Activated naive CD4-positive, alpha-beta T cell treated with anti-CD3 and anti-CD28 coated beads for 36 hours (primary cell): ENCODE measurements at regions of chr1 and their contacts with region 1.

Region 1: DNA sequence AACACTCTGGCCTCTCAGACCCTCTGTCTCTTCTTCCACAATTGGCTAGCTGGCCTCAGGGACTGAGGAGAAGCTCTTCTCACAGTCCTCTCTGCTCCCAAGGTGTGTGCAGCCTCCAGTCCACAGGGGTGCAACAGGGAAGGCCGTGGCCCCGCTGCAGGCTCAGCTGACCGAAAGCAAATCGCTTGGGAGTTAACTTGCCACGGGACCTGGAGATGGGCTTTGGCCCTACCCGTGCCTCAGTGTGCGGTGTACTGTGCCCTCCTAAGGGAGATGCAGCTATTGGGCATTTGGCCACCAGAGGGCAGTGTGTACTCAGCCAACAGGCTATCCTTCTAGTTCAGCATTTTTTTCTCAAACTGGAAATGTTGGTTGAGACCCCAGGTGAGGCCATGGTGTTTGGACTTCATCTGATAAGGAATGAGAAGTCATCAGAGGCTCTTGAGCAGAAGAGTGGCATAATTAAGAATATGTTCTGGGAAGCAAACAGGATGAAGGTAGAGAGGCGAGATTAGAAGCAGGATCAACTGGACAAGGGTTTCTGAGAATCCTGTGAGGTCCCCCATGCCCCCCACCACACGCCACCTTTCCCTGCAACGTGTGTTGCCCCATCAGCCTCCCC is 42.5 kb upstream of the TMEM125 start:
- DNase-seq: peak; percentile 93
- H3K4me3 Mint-ChIP-seq: no peak overlapping the region
- H3K27ac Mint-ChIP-seq: no peak overlapping the region
- H3K4me1 Mint-ChIP-seq: no peaks in the 10 kb centered on the region
- H3K27me3 Mint-ChIP-seq: peaks cover 2% of the 10 kb centered on the region

Region 2: GRCh38 chr1:43238085-43238484 is 10.8 kb after region 1 on chr1:
- CTCF ChIA-PET with region 1: interaction called, 14 read pairs
- intact Hi-C with region 1: no loop called
- DNase-seq: peak; percentile 62
- H3K4me3 Mint-ChIP-seq: no peak overlapping the region
- H3K27ac Mint-ChIP-seq: no peak overlapping the region
- H3K4me1 Mint-ChIP-seq: no peaks in the 10 kb centered on the region
- H3K27me3 Mint-ChIP-seq: peaks cover 2% of the 10 kb centered on the region

Region 3: GRCh38 chr1:43414634-43415223 is 187.5 kb after region 1 on chr1:
- CTCF ChIA-PET with region 1: interaction called, 35 read pairs
- intact Hi-C with region 1: loop called (anchors 1 kb)
- DNase-seq: peak; percentile 73
- H3K4me3 Mint-ChIP-seq: no peak overlapping the region
- H3K27ac Mint-ChIP-seq: no peak overlapping the region
- H3K4me1 Mint-ChIP-seq: no peaks in the 10 kb centered on the region
- H3K27me3 Mint-ChIP-seq: no peaks in the 10 kb centered on the region